MCF 10A (cell line): ENCODE measurements at regions of chr1 and their contacts with region 1.

Region 1: GRCh38 chr1:207861442-207862177 is 49.3 kb downstream of the CD34 start:
- DNase-seq: no peak
- H3K4me3 Mint-ChIP-seq: no peak overlapping the region
- H3K27ac Mint-ChIP-seq: peak overlapping the region; percentile 2
- H3K4me1 Mint-ChIP-seq: peaks cover 34% of the 10 kb centered on the region
- H3K27me3 Mint-ChIP-seq: no peaks in the 10 kb centered on the region
- CTCF ChIP-seq: no peak

Region 2: GRCh38 chr1:207805841-207806421 is 55.7 kb before region 1 on chr1:
- CTCF ChIA-PET with region 1: no interaction called
- POLR2A ChIA-PET with region 1: no interaction called
- intact Hi-C with region 1: no loop called
- DNase-seq: peak; percentile 100
- H3K4me3 Mint-ChIP-seq: peak overlapping the region; percentile 21
- H3K27ac Mint-ChIP-seq: peak overlapping the region; percentile 95
- H3K4me1 Mint-ChIP-seq: peaks cover 58% of the 10 kb centered on the region
- H3K27me3 Mint-ChIP-seq: no peaks in the 10 kb centered on the region
- CTCF ChIP-seq: no peak

Region 3: DNA sequence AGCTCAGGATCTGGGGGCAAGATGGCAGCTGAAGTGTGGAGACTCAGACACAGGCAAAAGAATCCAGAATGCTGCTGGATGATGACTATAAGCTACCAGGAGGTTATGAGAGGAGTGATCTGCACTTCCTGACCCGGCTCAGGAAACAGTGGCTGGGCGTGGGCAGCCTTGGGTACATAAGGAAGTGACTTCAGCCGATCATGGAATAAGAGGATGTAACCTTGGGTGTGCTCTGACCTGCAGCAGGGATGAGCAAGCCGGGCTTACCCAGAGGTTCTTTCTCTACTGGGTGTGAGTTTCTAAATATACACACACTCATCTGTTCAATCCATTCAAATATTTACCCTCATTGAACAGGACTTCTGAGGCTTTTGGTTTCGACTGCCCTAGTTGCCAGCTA is 13.4 kb before region 1 on chr1:
- CTCF ChIA-PET with region 1: interaction called, 790 read pairs
- POLR2A ChIA-PET with region 1: interaction called, 110 read pairs
- intact Hi-C with region 1: no loop called
- DNase-seq: peak; percentile 94
- H3K4me3 Mint-ChIP-seq: peak overlapping the region; percentile 62
- H3K27ac Mint-ChIP-seq: peak overlapping the region; percentile 94
- H3K4me1 Mint-ChIP-seq: peaks cover 73% of the 10 kb centered on the region
- H3K27me3 Mint-ChIP-seq: no peaks in the 10 kb centered on the region
- CTCF ChIP-seq: no peak